ENCODE measurements at regions of chr12 and their contacts with region 1.

Region 1: GRCh38 chr12:48165094-48165981 is 8.0 kb upstream of the ASB8 start:
- DNase-seq: peak in 1 of 2 donors; percentile 27
- ATAC-seq: peak in 6 of 8 donors; percentile 38 to 72 (median 54)
- H3K4me3 ChIP-seq: no peak overlapping the region
- H3K27ac ChIP-seq: no peak overlapping the region
- H3K4me1 ChIP-seq: peaks cover 0 to 5% (median 0%) of the 10 kb centered on the region in 9 donors
- H3K27me3 ChIP-seq: peaks cover 0 to 19% (median 0%) of the 10 kb centered on the region in 7 donors
- CTCF ChIP-seq: peak; percentile 72 to 95 (median 92)

Region 2: DNA sequence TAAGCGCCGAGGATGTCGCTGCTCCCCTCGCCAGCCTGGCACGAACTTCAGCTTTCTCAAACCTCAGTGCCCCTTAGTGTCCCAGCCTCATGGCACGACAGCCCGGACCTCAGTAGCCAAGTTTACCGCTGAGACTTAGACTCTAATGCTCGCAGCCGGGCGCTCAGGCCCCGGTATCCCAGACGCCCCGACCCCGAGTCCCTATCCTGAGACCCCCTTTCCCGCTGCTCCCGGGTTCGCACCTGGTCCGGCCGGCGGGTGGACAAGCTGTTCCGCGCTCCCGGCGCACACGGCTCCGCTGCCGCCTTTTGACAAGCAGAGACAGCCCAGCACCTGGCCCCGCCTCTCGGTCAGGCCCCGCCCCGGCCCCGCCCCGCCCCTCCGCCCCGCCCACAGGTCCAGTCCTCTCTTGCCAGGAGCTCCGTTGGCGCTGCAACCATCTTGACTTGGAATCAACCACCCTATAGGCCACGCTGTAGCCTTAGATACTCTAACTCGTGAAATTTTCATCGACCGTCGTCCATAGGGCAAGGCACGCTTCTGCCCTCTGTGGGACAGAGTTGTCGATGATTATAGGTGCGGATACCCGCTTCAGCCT is 260.5 kb before region 1 on chr12 and contains the start of gene VDR:
- intact Hi-C with region 1: loop called in 1 of 10 experiments (anchors 10 kb)
- DNase-seq: peak; percentile 45 to 72
- ATAC-seq: peak; percentile 80 to 88 (median 84)
- H3K4me3 ChIP-seq: peak within 1 kb of the TSS; percentile 32 to 72 (median 52)
- H3K27ac ChIP-seq: peak within 1 kb of the TSS in 1 of 10 donors; percentile 85
- H3K4me1 ChIP-seq: peaks cover 3 to 57% (median 19%) of the 10 kb centered on the region in 9 donors
- H3K27me3 ChIP-seq: peaks cover 0 to 43% (median 28%) of the 10 kb centered on the region in 7 donors
- CTCF ChIP-seq: peak in 1 of 9 donors; percentile 23
- total RNA-seq, gene VDR: 0.08 to 3.0 (median 0.31) TPM

Region 3: DNA sequence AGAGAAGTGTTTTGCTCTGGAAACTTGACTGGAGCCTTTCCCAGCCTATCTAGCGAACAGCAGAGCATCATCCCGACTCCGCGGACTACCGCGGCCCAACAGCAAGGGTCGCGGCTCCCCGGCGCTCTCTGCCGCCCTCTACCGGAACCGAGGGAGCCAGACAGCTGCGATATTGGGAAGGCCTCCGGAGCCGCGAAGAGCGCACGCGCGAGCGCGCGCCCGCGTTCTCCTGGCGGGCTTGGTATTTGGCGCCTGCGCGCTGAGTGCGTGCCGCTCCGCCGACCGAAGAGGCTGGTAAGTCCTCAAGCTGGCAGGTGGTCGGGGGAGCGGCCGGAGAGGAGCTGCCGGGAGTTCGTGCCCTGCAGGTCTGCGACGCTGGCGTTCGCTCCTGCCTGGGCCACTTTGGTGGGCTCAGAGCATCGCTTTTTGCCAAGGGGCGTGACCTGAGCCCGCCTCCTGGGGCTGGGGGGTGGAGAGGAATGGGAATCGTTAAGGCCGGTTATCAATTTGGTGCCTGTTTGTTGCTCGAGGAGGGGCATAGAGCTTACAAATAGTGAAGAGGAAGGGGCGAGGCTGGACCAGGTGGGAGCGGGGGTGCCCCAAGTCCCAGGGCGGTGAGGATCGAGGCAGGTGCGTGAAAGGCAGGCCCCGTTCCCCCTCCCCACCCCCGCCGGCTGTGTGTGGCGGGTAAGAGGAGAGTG is 201.8 kb before region 1 on chr12 and contains the start of gene TMEM106C:
- intact Hi-C with region 1: loop called in 2 of 10 experiments (anchors 10 kb)
- DNase-seq: peak; percentile 88 to 94
- ATAC-seq: peak; percentile 91 to 98 (median 96)
- H3K4me3 ChIP-seq: peak within 1 kb of the TSS; percentile 49 to 98 (median 84)
- H3K27ac ChIP-seq: peak within 1 kb of the TSS in 8 of 10 donors; percentile 28 to 76 (median 54)
- H3K4me1 ChIP-seq: peaks cover 0 to 49% (median 24%) of the 10 kb centered on the region in 9 donors
- H3K27me3 ChIP-seq: peaks cover 0 to 8% (median 0%) of the 10 kb centered on the region in 7 donors
- CTCF ChIP-seq: peak; percentile 94 to 100 (median 99)
- total RNA-seq, gene TMEM106C: 22.3 to 61.8 (median 40.0) TPM

Region 4: DNA sequence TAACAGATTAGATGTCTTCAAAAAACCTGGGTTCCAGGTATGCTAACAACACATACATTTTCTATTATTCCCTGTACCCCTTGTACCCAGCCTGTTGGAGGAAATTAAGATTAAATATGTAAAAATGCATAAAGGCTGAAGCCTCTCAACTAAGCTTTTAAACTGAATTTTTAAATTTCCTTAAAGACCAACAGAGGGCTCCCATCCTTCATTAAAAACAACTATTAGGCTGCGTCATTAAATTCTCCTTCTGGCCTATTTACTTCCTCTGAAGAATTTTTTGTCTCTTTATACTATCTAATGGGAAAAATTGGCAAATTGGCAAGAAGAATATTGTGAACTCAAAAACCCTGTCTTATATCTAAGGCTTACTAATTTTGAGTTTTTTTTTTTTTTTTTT is 81.3 kb before region 1 on chr12:
- intact Hi-C with region 1: loop called (anchors 1 to 5 kb)
- DNase-seq: no peak
- ATAC-seq: peak in 3 of 8 donors; percentile 26 to 54 (median 51)
- H3K4me3 ChIP-seq: no peak overlapping the region
- H3K27ac ChIP-seq: no peak overlapping the region
- H3K4me1 ChIP-seq: peaks cover 0 to 1% (median 0%) of the 10 kb centered on the region in 9 donors
- H3K27me3 ChIP-seq: no peaks in the 10 kb centered on the region
- CTCF ChIP-seq: peak in 7 of 9 donors; percentile 25 to 64 (median 53)

Region 5: GRCh38 chr12:48105862-48106680 is 59.3 kb before region 1 on chr12 and contains the start of gene SENP1:
- intact Hi-C with region 1: loop called in 1 of 10 experiments (anchors 5 kb)
- DNase-seq: peak; percentile 89 to 91
- ATAC-seq: peak; percentile 94 to 98 (median 97)
- H3K4me3 ChIP-seq: peak within 1 kb of the TSS; percentile 71 to 99 (median 90)
- H3K27ac ChIP-seq: peak within 1 kb of the TSS; percentile 91 to 99 (median 97)
- H3K4me1 ChIP-seq: peaks cover 0 to 24% (median 19%) of the 10 kb centered on the region in 9 donors
- H3K27me3 ChIP-seq: no peaks in the 10 kb centered on the region
- CTCF ChIP-seq: peak in 6 of 9 donors; percentile 17 to 49 (median 34)
- total RNA-seq, gene SENP1: 7.1 to 10.7 (median 8.7) TPM

Measured in heart right ventricle (tissue), 16 donors.